GM12878 (cell line): ENCODE measurements at regions of chr20 and their contacts with region 1.

Region 1: DNA sequence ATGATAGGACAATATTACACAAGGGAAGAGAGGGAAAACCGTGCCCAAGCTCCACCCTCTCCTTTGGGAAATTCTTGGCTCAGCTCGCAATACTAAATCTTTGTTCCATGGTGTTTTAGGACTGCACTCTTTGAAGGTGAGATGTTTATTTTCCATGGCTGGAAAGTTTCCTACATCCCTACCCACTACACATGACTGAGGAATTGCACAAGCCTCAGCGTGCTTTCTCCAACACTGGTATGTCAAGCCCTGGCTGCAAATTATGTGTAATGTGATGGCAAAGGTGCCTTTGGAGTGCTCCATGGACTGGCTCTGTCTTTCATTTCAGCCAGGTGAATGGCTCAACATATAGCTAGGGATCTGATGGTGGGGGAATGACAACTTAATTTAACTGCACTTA is 134.3 kb downstream of the ISM1 start:
- DNase-seq: no peak
- ATAC-seq: no peak
- H3K4me3 ChIP-seq: no peak overlapping the region
- H3K27ac ChIP-seq: no peak overlapping the region
- H3K4me1 ChIP-seq: no peaks in the 10 kb centered on the region
- H3K27me3 ChIP-seq: no peaks in the 10 kb centered on the region
- CTCF ChIP-seq: no peak
- EP300 ChIP-seq: no peak
- POLR2A ChIP-seq: no peak
- RAD21 ChIP-seq: no peak

Region 2: DNA sequence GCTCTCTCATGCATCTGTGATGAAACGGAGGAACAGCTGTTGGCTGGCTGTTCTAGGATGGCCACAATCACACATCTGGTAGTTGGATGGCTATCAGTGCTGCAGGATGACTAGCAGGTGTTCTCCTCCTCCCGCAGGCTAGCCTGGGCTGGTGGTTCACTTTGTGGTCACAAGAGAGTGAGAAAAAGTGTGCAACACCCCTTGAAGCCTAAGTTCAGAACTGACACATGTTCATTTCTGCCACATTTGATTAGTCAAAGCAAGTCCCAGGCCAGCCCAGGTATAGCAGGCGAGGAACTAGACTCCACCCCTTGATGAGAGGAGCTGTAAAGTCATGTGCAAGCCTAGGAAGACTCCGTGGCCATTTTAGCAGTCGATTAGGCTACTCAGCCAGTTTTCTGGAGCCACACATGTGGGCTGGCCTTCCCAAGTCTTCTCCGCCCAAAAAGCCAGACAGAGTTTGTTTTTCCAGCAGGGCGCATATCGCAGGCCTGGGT is 13.6 kb before region 1 on chr20:
- CTCF ChIA-PET with region 1: interaction called, 9 read pairs
- POLR2A ChIA-PET with region 1: interaction called, 6 read pairs
- RAD21 ChIA-PET with region 1: interaction called, 12 read pairs
- SMC1A ChIA-PET with region 1: interaction called, 7 read pairs
- in situ Hi-C with region 1: no loop called
- intact Hi-C with region 1: no loop called
- DNase-seq: no peak
- ATAC-seq: peak; percentile 35
- H3K4me3 ChIP-seq: no peak overlapping the region
- H3K27ac ChIP-seq: no peak overlapping the region
- H3K4me1 ChIP-seq: no peaks in the 10 kb centered on the region; the same call in 1 of the 2 replicates
- H3K27me3 ChIP-seq: no peaks in the 10 kb centered on the region
- CTCF ChIP-seq: no peak
- EP300 ChIP-seq: no peak
- POLR2A ChIP-seq: no peak
- RAD21 ChIP-seq: no peak